ENCODE measurements at regions of chr20 and their contacts with region 1.

Region 1: GRCh38 chr20:47576516-47577033 is 74.9 kb downstream of the NCOA3 start:
- DNase-seq: no peak
- H3K4me3 Mint-ChIP-seq: peak overlapping the region; percentile 62
- H3K27ac Mint-ChIP-seq: peak overlapping the region; percentile 74
- H3K4me1 Mint-ChIP-seq: peaks cover 76% of the 10 kb centered on the region
- H3K27me3 Mint-ChIP-seq: no peaks in the 10 kb centered on the region

Region 2: DNA sequence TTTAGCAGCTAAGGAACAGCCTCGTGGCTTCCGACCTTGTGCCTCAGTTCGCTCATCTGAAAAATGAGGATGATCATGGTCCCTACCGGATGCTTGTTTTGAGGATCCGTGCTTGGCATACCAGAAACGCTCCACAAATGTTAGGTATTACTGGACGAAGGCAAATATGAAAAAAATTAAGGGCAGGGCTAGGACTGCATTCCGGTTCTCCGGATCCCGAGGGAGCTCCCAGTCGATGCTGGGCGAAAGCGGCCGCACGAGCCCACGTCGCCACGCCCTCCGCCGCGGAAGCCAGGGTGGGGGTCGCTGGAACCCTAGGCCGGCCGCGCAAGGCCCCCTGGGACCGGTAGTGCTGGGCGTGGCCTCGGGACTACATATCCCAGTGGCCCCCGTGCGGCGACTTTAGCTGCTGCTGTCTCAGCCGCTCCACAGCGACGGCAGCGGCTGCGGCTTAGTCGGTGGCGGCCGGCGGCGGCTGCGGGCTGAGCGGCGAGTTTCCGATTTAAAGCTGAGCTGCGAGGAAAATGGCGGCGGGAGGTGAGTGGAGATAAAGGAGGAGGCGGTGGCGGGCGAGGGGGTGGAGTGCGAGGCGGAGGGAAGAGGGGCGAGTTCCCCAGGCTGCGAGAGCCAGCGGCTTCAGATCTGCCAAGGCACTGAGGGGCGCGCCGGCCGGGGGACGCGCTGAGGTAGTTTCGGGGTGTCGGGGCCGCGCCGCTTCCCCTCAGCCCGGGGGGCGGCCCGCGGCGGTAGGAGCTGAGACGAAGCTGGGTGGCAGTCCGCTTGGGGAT is 74.9 kb before region 1 on chr20 and contains the start of gene NCOA3:
- intact Hi-C with region 1: no loop called
- DNase-seq: peak; percentile 89
- H3K4me3 Mint-ChIP-seq: peak within 1 kb of the TSS; percentile 92
- H3K27ac Mint-ChIP-seq: peak within 1 kb of the TSS; percentile 99
- H3K4me1 Mint-ChIP-seq: peaks cover 61% of the 10 kb centered on the region
- H3K27me3 Mint-ChIP-seq: no peaks in the 10 kb centered on the region
- total RNA-seq, gene NCOA3: 132 and 133 TPM in 2 replicates

Region 3: GRCh38 chr20:47544240-47544639 is 32.3 kb before region 1 on chr20:
- intact Hi-C with region 1: no loop called
- DNase-seq: no peak
- H3K4me3 Mint-ChIP-seq: no peak overlapping the region
- H3K27ac Mint-ChIP-seq: peak overlapping the region; percentile 41
- H3K4me1 Mint-ChIP-seq: peaks cover 50% of the 10 kb centered on the region
- H3K27me3 Mint-ChIP-seq: no peaks in the 10 kb centered on the region

Region 4: GRCh38 chr20:47586646-47587306 is 10.2 kb after region 1 on chr20:
- intact Hi-C with region 1: loop called (anchors 2 kb)
- DNase-seq: no peak
- H3K4me3 Mint-ChIP-seq: no peak overlapping the region
- H3K27ac Mint-ChIP-seq: no peak overlapping the region
- H3K4me1 Mint-ChIP-seq: peaks cover 32% of the 10 kb centered on the region
- H3K27me3 Mint-ChIP-seq: no peaks in the 10 kb centered on the region

Region 5: DNA sequence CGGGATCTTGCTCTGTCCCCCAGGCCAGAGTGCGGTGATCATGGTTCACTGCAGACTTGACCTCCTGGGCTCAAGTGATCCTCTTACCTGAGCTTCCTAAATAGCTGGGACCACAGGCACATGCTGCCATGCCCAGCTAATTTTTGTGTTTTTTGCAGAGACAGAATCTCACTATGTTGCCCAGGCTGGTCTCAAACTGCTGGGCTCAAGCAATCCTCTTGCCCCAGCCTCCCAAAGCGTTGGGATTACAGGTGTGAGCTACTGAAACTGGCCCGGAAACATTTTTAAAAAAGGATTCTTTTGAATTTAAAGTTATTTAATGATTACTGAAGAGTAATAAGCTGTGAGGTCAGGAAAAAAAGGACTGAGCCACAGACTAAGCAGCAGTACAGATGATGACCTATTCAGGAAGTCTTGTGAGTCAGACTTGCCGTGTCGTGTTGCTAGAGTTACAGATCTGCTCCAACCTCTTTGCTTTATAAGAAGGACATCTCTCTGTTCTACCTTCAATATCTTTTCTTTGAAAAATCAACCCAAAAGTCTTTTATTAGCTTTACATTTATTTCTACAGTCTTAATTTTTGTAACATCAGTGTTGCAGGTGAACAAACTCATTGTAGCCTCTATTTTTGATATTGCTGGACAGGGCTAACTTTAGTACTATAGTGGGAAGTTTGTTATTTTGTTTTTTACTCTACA is 33.8 kb after region 1 on chr20:
- intact Hi-C with region 1: loop called (anchors 5 kb)
- DNase-seq: peak; percentile 60
- H3K4me3 Mint-ChIP-seq: peak overlapping the region; percentile 77
- H3K27ac Mint-ChIP-seq: peak overlapping the region; percentile 97
- H3K4me1 Mint-ChIP-seq: peaks cover 84% of the 10 kb centered on the region
- H3K27me3 Mint-ChIP-seq: no peaks in the 10 kb centered on the region